ENCODE measurements at regions of chrX and their contacts with region 1.

Region 1: DNA sequence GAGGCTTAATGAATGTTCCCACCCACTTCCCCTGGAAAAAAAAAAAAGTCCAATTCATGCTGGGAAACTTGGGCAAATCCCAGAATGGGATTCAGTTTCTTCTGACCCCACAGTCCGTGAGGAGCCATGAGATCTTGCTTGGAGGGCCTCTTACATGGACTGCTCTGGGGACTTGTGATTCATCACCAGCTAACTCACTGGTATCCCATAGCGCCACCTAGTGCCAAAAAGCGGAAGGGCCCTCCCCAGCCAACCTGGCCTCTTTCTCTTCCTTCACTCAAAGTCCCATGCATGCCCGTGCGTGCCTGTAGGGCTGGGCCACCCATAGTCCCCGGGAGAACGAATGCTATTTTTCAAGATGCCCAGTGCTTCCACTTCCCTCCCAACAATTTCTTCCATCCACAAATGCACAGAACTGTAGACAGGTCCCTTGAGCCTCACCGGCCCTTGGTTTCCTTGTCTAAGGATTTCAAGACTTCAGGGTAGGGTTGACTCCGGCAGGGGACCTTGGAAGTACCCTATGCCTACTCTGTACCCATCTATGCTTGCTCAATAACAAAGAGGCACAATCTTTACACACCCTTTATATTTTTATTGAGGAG is 5.1 kb downstream of the RTL5 start:
- DNase-seq: peak in 1 of 2 donors; percentile 95
- H3K4me3 ChIP-seq: no peak overlapping the region
- H3K27ac ChIP-seq: peak overlapping the region; percentile 66
- H3K4me1 ChIP-seq: peaks cover 20% of the 10 kb centered on the region
- H3K27me3 ChIP-seq: no peaks in the 10 kb centered on the region
- CTCF ChIP-seq: peak; percentile 69 to 73 (median 71)
- POLR2A ChIP-seq: no peak

Region 2: DNA sequence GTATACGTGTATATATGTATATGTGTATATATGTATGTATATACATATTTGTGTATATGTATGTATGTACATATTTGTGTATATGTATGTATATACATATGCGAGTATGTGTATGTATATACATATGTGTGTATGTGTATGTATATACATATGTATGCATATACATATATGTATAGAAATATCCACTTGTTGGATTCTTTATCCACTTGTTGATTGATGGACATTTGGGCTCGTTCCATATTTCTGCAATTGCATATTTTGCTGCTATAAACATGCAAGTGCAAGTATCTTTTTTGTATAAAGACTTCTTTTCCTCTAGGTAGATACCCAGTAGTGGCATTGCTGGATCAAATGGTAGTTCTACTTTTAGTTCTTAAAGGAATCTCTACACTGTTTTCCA is 241.5 kb before region 1 on chrX:
- intact Hi-C with region 1: no loop called
- DNase-seq: no peak
- H3K4me3 ChIP-seq: no peak overlapping the region
- H3K27ac ChIP-seq: no peak overlapping the region
- H3K4me1 ChIP-seq: no peaks in the 10 kb centered on the region
- H3K27me3 ChIP-seq: no peaks in the 10 kb centered on the region
- CTCF ChIP-seq: no peak
- POLR2A ChIP-seq: no peak

Region 3: GRCh38 chrX:72018277-72019112 is 108.1 kb before region 1 on chrX:
- intact Hi-C with region 1: loop called (anchors 1 kb)
- DNase-seq: peak; percentile 72 to 90
- H3K4me3 ChIP-seq: peak overlapping the region in 1 of 2 donors; percentile 38
- H3K27ac ChIP-seq: peak overlapping the region; percentile 60
- H3K4me1 ChIP-seq: no peaks in the 10 kb centered on the region
- H3K27me3 ChIP-seq: no peaks in the 10 kb centered on the region
- CTCF ChIP-seq: peak in 2 of 3 experiments; percentile 39 to 65
- POLR2A ChIP-seq: no peak